Breast epithelium (tissue), 4 donors: ENCODE measurements at regions of chr3 and their contacts with region 1.

Region 1: DNA sequence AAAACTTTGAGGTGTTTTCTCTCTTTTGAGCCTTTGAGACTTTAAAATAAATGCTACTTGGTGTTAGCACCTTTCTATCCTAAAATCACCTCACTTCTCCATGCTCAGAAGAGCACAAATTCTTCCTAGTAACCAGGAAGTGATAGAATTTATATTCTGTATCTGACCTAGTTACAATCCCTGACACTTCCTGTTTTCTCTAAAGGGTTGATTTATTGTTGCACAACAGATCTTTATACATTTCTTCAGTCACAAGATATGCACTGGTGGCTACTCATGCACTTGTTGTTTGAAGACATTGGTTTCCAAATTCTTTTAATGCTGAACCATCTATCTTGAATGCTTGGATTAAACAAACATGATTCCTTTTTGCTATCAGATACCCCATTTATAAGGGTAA is 47.2 kb upstream of the CNTN3 start:
- DNase-seq: no peak
- H3K4me3 ChIP-seq: no peak overlapping the region
- H3K27ac ChIP-seq: no peak overlapping the region
- H3K4me1 ChIP-seq: no peaks in the 10 kb centered on the region
- H3K27me3 ChIP-seq: no peaks in the 10 kb centered on the region
- CTCF ChIP-seq: no peak
- POLR2A ChIP-seq: no peak

Region 2: GRCh38 chr3:74630602-74631001 is 31.1 kb before region 1 on chr3:
- intact Hi-C with region 1: no loop called
- DNase-seq: no peak
- H3K4me3 ChIP-seq: no peak overlapping the region
- H3K27ac ChIP-seq: no peak overlapping the region
- H3K4me1 ChIP-seq: no peaks in the 10 kb centered on the region
- H3K27me3 ChIP-seq: no peaks in the 10 kb centered on the region
- CTCF ChIP-seq: peak in 1 of 3 donors; percentile 31
- POLR2A ChIP-seq: no peak

Region 3: GRCh38 chr3:74673326-74673725 is 11.7 kb after region 1 on chr3:
- intact Hi-C with region 1: no loop called
- DNase-seq: no peak
- H3K4me3 ChIP-seq: no peak overlapping the region
- H3K27ac ChIP-seq: no peak overlapping the region
- H3K4me1 ChIP-seq: no peaks in the 10 kb centered on the region
- H3K27me3 ChIP-seq: no peaks in the 10 kb centered on the region
- CTCF ChIP-seq: no peak
- POLR2A ChIP-seq: no peak

Region 4: GRCh38 chr3:74693696-74694393 is 32.2 kb after region 1 on chr3:
- intact Hi-C with region 1: loop called (anchors 2 kb)
- DNase-seq: no peak
- H3K4me3 ChIP-seq: no peak overlapping the region
- H3K27ac ChIP-seq: no peak overlapping the region
- H3K4me1 ChIP-seq: no peaks in the 10 kb centered on the region
- H3K27me3 ChIP-seq: no peaks in the 10 kb centered on the region
- CTCF ChIP-seq: no peak
- POLR2A ChIP-seq: no peak